Sigmoid colon (tissue), 7 donors: ENCODE measurements at regions of chr4 and their contacts with region 1.

Region 1: DNA sequence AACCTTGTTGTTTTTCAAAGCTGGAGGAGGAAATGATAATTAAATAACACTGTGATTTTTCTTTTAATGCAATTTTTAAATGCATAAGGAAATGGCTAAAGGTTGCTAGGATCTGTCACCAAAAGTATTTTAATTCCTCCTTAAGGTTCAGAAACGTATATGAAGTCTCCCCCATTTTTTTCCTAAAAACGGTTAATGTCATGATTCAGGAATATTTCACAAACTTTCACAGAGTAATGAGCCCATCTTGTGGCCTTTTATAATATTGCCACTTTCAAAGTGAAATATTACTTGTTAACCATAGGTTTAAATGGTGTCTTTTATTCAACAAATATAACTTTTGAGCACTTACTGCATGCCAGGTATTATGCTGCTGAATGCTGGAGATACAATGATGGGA is 99.5 kb upstream of the USP38 start:
- DNase-seq: no peak
- H3K4me3 ChIP-seq: no peak overlapping the region
- H3K27ac ChIP-seq: no peak overlapping the region
- H3K4me1 ChIP-seq: peaks cover 0 to 7% (median 0%) of the 10 kb centered on the region in 4 donors
- H3K27me3 ChIP-seq: no peaks in the 10 kb centered on the region
- CTCF ChIP-seq: peak in 2 of 4 experiments; percentile 18 to 31
- EP300 ChIP-seq: no peak
- POLR2A ChIP-seq: no peak

Region 2: GRCh38 chr4:142883040-142883832 is 202.0 kb before region 1 on chr4:
- intact Hi-C with region 1: loop called (anchors 10 kb)
- DNase-seq: no peak
- H3K4me3 ChIP-seq: no peak overlapping the region
- H3K27ac ChIP-seq: no peak overlapping the region
- H3K4me1 ChIP-seq: no peaks in the 10 kb centered on the region
- H3K27me3 ChIP-seq: no peaks in the 10 kb centered on the region
- CTCF ChIP-seq: peak in 3 of 4 experiments; percentile 33 to 47 (median 35)
- EP300 ChIP-seq: no peak
- POLR2A ChIP-seq: no peak